Prostate gland (tissue), 2 donors: ENCODE measurements at regions of chr11 and their contacts with region 1.

Region 1: DNA sequence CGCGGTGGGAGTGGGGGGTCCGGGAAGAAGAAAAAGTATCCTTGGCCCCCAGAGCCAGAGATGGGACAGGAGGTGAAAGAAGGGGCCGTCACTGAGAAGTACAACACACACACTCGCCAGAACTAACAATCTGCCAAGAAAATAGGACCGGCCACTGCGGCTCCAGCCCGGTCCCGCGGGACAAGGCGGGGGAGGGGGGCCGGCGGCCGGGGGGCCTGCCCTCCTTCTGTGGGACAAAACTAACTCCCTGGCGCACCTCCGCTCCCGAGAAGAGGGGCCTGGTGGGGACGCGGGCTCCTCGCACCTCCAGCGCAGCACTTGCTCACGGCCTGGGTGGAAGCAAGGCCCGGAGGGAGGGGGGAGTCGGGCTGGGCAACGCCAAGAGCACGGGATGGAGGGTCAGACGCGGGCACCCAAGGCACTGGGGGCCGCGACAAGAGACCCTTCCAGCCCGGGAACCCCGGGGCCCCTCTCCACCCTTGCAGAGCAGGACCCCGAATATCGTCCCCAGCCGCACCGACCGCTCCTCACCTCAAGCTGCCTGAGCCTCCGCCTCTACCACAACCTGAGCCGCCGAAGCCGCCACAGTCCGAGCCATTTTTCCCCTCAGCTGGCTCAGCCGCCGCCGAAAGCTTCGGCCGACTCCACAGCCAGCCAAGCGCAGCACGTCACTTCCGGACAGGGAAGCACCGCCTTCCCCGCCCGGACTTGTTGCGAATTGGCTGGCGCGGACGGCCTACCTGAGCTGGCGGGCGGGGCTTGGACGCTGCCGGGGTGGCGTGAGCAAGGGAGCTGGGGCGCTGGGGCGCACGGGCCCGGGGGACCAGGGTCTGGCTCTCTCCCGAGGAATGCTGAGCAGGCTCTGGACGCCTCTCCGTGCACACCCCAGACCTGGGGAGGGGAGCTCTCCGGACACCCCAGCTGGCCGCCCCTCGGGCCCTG is at the start of gene PIK3C2A:
- DNase-seq: peak; percentile 99
- H3K4me3 ChIP-seq: peak within 1 kb of the TSS; percentile 85 to 90
- H3K27ac ChIP-seq: peak within 1 kb of the TSS; percentile 99
- H3K4me1 ChIP-seq: peaks cover 6% of the 10 kb centered on the region
- H3K27me3 ChIP-seq: no peaks in the 10 kb centered on the region
- CTCF ChIP-seq: no peak
- POLR2A ChIP-seq: peak; percentile 99
- total RNA-seq, gene PIK3C2A: 66.0 to 90.0 TPM

Region 2: GRCh38 chr11:17244046-17244445 is 36.5 kb after region 1 on chr11:
- intact Hi-C with region 1: no loop called
- DNase-seq: no peak
- H3K4me3 ChIP-seq: no peak overlapping the region
- H3K27ac ChIP-seq: no peak overlapping the region
- H3K4me1 ChIP-seq: no peaks in the 10 kb centered on the region
- H3K27me3 ChIP-seq: no peaks in the 10 kb centered on the region
- CTCF ChIP-seq: no peak
- POLR2A ChIP-seq: no peak

Region 3: DNA sequence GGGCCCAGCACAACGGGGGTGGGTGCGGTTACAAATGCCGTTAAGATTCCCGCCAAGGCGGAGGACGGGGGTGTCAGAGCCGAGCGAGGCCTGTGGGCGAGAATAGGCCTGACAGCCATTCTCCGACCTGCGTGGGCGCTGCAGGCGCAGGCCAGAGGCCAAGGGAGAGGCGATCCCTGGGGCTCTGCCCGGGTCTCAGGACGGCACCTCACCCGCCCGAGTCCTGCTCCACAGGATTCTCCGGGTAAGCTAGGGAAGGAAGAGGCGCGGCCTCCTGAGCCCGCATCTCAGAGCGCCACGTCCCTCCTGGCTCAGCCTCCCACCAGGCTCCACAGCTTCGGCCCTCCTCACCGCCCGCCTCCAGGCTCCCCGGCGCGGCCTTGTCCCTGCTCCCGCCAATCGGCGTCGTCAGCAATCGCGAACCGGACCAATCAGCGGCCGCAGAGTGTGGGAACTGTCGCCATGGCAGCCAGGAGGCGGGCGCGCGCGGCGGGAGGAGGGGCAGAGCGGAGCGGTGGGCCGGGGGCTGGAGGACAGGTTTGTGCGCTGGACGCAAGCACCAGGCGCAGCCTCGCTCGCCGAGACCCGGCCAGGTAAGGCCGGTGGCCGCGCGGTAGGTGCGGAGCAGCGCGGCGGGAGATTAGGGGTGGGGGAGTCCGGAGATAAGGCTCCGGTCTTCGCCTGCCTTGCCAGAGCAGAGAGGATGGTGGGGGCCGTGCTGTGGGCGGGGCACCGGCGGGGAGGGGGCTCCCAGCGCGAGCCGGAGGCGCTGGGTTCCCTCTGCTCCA is 68.8 kb after region 1 on chr11 and contains the start of gene NUCB2:
- intact Hi-C with region 1: loop called (anchors 5 kb)
- DNase-seq: peak; percentile 98
- H3K4me3 ChIP-seq: peak within 1 kb of the TSS; percentile 71 to 80
- H3K27ac ChIP-seq: peak within 1 kb of the TSS; percentile 82 to 83
- H3K4me1 ChIP-seq: no peaks in the 10 kb centered on the region
- H3K27me3 ChIP-seq: no peaks in the 10 kb centered on the region
- CTCF ChIP-seq: peak in 1 of 4 experiments; percentile 32
- POLR2A ChIP-seq: peak; percentile 93
- total RNA-seq, gene NUCB2: 39.2 to 110 TPM